Right ventricle myocardium inferior (tissue), 1 donor: ENCODE measurements at regions of chr10 and their contacts with region 1.

Region 1: DNA sequence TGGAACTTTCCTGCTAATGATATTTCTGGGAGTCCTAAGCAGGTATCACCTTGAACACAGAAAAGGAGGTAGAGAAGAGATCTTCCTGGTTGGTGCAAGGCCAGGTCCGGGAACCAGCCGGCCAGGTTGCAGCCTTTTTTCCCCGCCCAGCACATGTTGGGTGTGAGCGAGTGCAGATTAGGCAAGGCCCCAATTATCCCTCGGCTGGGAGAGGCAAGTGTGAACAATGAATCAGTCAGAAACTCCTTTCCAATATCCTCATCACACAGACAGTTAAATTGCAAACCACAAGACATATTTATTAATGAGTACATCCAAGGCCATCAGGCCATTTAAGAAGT is 115.0 kb upstream of the AFAP1L2 start:
- DNase-seq: no peak
- ATAC-seq: peak; percentile 40

Region 2: DNA sequence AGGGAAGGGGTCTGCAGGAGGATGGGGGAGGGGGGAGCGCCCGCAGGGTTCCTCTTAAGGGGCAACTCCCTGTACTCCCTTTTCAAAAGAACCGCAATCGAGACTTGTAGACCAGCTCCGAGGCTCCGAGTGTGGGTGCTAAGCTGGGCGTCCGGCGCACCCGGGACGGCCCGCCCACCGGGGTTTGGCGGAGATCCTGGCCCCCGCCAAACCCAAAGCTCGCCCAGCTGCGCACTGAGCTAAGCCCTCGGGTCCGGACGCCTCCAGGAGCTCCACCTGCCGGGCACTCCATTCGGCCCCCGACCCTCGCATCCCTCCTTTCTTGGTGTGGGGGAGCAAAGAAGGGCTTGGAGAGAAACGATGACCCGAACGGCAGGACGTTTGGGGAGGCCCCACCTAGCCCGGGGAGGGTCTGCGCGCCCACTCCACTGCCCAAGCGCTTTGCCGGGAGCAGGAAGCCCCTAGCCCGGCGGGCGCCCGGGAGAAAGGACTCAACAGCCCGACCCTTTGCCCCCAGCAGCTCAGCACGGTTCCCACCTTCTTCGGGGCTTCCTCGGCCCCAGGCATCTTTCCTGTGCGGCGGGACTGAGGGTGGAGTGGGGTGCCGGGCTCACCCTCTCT is 115.6 kb before region 1 on chr10:
- intact Hi-C with region 1: no loop called
- DNase-seq: no peak
- ATAC-seq: peak; percentile 58

Region 3: GRCh38 chr10:114486938-114487814 is 32.1 kb before region 1 on chr10:
- intact Hi-C with region 1: loop called (anchors 5 kb)
- DNase-seq: no peak
- ATAC-seq: no peak

Region 4: DNA sequence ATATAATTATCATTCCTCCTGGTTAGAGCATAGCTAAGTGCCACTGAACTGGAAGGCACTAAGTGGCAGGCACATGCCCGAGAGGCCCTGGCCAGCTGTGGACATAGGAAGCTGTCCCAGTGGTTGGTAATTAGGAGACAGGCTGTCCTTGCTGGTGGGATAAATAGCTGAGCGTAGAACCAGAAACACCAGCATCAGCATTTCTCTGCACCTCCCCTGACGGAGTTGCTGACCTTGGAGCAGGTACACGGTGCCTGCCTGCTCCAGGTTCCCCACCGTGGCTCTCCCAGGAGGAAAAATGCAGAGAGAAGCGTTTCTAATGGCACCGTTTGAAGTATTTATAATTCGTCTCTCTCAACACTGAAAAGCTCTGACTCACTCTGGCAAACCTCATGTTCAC is 144.4 kb after region 1 on chr10:
- intact Hi-C with region 1: no loop called
- DNase-seq: no peak
- ATAC-seq: peak; percentile 65

Region 5: DNA sequence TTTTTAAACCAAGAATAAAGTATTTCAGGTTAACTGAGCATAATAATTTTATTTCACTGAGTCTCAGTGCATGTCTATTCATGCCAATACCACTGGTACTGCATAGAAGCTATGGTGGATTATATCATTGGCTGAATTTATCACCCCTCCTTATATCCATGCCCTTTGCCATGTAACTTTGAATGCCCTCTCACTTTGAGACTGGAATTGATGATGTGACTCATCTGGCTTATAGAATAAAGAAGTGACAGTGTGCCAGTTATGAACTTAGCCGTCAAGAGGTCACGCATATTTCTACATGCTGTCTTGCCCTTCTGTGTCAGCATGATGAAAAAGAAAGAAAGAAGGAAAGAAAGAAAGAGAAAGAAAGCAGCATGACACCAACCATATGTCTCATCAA is 159.6 kb after region 1 on chr10:
- intact Hi-C with region 1: no loop called
- DNase-seq: no peak
- ATAC-seq: no peak